ENCODE measurements at regions of chr15 and their contacts with region 1.

Region 1: DNA sequence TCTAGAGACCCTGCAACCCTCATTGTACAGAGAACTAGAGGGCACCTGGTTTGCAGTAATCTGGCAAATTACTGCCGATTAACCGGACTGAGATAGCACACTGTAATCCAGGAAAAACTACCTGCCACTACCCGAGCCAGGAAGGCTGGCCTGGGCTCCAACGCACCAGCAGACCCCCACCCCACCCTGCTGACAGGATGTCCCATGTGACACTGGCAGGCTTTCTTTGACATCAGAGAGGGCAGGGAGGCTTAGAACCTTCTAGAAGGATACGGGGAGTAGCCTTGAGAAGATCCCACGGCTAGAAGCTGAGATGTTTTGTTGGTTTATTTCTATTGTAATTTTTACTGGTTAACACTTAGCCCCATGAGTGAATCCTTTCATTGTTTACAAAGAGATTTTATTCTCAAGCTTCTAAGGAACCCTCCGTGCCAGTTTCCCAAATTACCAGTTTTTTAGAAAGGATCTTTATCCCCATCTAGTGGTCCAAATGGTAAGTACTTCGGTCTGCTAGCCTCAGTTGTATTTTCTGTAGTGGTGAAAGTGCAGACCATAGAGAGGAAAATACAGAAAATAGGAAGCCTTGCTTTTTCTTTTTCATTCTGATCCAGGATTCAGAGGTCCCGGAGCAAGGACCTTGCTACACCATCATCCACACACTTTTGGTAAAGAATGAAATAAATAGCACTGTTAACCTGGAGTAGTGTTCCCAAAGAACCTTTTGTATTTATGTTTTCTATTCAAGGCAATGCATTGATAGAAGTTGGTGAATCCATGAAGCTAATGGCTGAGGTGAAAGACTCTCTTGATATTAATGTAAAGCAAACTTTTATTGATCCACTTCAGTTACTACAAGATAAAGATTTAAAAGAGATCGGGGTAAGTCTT is 81.9 kb upstream of the ADAMTSL3 start:
- DNase-seq: no peak
- ATAC-seq: no peak
- H3K4me3 ChIP-seq: no peak overlapping the region
- H3K27ac ChIP-seq: no peak overlapping the region
- H3K4me1 ChIP-seq: no peaks in the 10 kb centered on the region
- H3K27me3 ChIP-seq: no peaks in the 10 kb centered on the region
- CTCF ChIP-seq: peak; percentile 37 to 68 (median 50)
- POLR2A ChIP-seq: no peak

Region 2: GRCh38 chr15:83504365-83504764 is 67.7 kb before region 1 on chr15:
- intact Hi-C with region 1: no loop called
- DNase-seq: no peak
- ATAC-seq: no peak
- H3K4me3 ChIP-seq: no peak overlapping the region
- H3K27ac ChIP-seq: no peak overlapping the region
- H3K4me1 ChIP-seq: no peaks in the 10 kb centered on the region
- H3K27me3 ChIP-seq: no peaks in the 10 kb centered on the region
- CTCF ChIP-seq: no peak
- POLR2A ChIP-seq: no peak

Region 3: GRCh38 chr15:83653639-83654378 is 81.7 kb after region 1 on chr15 and contains the start of gene ADAMTSL3:
- intact Hi-C with region 1: loop called in 2 of 10 experiments (anchors 5 to 10 kb)
- DNase-seq: peak; percentile 84 to 92 (median 88)
- ATAC-seq: peak; percentile 3 to 81 (median 57)
- H3K4me3 ChIP-seq: peak within 1 kb of the TSS; percentile 43 to 85 (median 68)
- H3K27ac ChIP-seq: peak within 1 kb of the TSS; percentile 14 to 90 (median 82)
- H3K4me1 ChIP-seq: peaks cover 0 to 45% (median 11%) of the 10 kb centered on the region in 12 donors
- H3K27me3 ChIP-seq: peaks cover 0 to 18% (median 0%) of the 10 kb centered on the region in 9 donors
- CTCF ChIP-seq: peak in 5 of 12 donors; percentile 6 to 31 (median 13)
- POLR2A ChIP-seq: peak in 1 of 2 donors; percentile 29
- total RNA-seq, gene ADAMTSL3: 6.6 to 13.2 (median 7.7) TPM

Region 4: DNA sequence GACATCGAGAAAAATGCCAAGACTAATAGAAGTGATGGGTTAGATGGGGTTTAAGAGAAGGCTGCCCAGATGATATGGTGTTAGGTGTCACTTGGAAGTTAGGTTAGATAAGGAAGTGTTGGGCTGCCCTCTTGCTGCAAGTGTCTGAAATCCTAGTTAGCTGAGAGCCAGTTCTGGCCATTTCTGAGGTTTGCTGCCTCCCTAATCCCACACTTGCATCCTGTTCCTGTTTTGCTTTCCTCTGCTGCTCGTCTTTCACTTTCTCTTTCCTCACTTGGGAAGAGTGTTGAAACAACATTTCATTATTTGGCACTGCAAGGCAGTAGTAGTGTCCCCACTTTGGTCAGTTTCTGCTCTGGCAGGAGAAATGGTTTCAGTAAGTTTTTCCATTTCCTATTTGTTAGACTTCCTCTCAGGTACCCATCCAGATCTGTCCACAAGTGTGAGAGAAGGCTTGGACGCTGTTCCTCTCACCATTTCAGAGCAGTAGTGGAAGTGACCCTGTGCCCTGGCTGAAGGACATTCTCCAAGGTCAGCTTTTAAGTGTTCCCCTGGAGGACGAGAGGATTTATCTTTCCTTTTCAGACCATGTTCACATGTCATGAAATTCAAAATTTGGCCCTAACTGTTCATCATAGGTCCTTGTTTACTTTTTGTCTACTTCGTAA is 175.1 kb after region 1 on chr15:
- intact Hi-C with region 1: loop called in 6 of 10 experiments (anchors 5 to 10 kb)
- DNase-seq: peak in 4 of 5 donors; percentile 28 to 44 (median 35)
- ATAC-seq: peak; percentile 59 to 89 (median 85)
- H3K4me3 ChIP-seq: peak overlapping the region in 8 of 12 donors; percentile 4 to 42 (median 16)
- H3K27ac ChIP-seq: peak overlapping the region in 11 of 12 donors; percentile 6 to 81 (median 54)
- H3K4me1 ChIP-seq: peaks cover 0 to 25% (median 10%) of the 10 kb centered on the region in 12 donors
- H3K27me3 ChIP-seq: no peaks in the 10 kb centered on the region
- CTCF ChIP-seq: peak; percentile 7 to 62 (median 40)
- POLR2A ChIP-seq: no peak

Region 5: DNA sequence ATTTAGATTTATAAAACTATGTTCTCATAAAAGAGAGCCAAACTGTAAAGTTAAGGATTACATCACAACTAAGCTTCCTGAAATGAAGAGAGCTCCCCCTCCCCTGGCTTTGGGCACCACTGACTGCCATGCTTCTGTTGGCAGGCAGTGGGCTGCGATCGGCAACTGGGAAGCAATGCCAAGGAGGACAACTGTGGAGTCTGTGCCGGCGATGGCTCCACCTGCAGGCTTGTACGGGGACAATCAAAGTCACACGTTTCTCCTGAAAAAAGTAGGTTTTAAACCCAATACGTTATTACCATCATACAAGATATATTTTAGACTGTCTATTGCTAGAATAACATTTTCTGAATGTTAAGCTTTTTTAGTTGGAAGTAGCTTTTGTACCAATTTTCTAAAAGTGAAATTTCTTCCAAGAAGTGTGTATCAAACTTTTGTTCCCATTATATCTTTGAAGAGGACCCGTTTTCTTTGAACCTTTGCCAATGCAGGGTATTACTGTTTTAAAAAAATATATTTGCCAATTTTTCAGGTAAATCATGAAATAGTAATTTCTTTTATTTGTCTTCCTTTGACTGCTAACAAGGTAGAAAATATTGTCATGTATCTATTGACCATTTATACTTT is 266.0 kb after region 1 on chr15:
- intact Hi-C with region 1: loop called in 1 of 10 experiments (anchors 10 kb)
- DNase-seq: peak in 3 of 5 donors; percentile 33 to 55 (median 42)
- ATAC-seq: peak in 3 of 4 donors; percentile 53 to 71 (median 63)
- H3K4me3 ChIP-seq: no peak overlapping the region
- H3K27ac ChIP-seq: no peak overlapping the region
- H3K4me1 ChIP-seq: peaks cover 0 to 10% (median 5%) of the 10 kb centered on the region in 12 donors
- H3K27me3 ChIP-seq: no peaks in the 10 kb centered on the region
- CTCF ChIP-seq: peak; percentile 16 to 62 (median 38)
- POLR2A ChIP-seq: no peak

Region 6: GRCh38 chr15:84009616-84010015 is 437.6 kb after region 1 on chr15:
- intact Hi-C with region 1: loop called in 1 of 10 experiments (anchors 10 kb)
- DNase-seq: peak in 2 of 5 donors; percentile 35 to 40
- ATAC-seq: peak in 3 of 4 donors; percentile 41 to 65 (median 42)
- H3K4me3 ChIP-seq: no peak overlapping the region
- H3K27ac ChIP-seq: no peak overlapping the region
- H3K4me1 ChIP-seq: peaks cover 0 to 8% (median 0%) of the 10 kb centered on the region in 12 donors
- H3K27me3 ChIP-seq: no peaks in the 10 kb centered on the region
- CTCF ChIP-seq: no peak
- POLR2A ChIP-seq: no peak

Region 7: GRCh38 chr15:84023636-84024035 is 451.6 kb after region 1 on chr15:
- intact Hi-C with region 1: loop called in 4 of 10 experiments (anchors 5 to 10 kb)
- DNase-seq: peak in 2 of 5 donors; percentile 11 to 47
- ATAC-seq: no peak
- H3K4me3 ChIP-seq: no peak overlapping the region
- H3K27ac ChIP-seq: no peak overlapping the region
- H3K4me1 ChIP-seq: no peaks in the 10 kb centered on the region
- H3K27me3 ChIP-seq: no peaks in the 10 kb centered on the region
- CTCF ChIP-seq: peak; percentile 38 to 67 (median 54)
- POLR2A ChIP-seq: no peak